Natural killer cell (primary cell): ENCODE measurements at regions of chr15 and their contacts with region 1.

Region 1: GRCh38 chr15:90233376-90234095 is at the start of gene CIB1:
- DNase-seq: peak; percentile 66 to 95
- ATAC-seq: peak; percentile 79 to 93 (median 81)
- H3K4me3 ChIP-seq: peak within 1 kb of the TSS; percentile 84
- H3K4me3 Mint-ChIP-seq: peak within 1 kb of the TSS; percentile 90
- H3K27ac ChIP-seq: peak within 1 kb of the TSS; percentile 95
- H3K27ac Mint-ChIP-seq: peak within 1 kb of the TSS; percentile 99
- H3K4me1 ChIP-seq: peaks cover 47% of the 10 kb centered on the region
- H3K4me1 Mint-ChIP-seq: peaks cover 44 to 53% of the 10 kb centered on the region in 2 donors
- H3K27me3 ChIP-seq: no peaks in the 10 kb centered on the region
- H3K27me3 Mint-ChIP-seq: no peaks in the 10 kb centered on the region
- CTCF ChIP-seq: no peak
- total RNA-seq, gene CIB1: 136 to 209 (median 154) TPM

Region 2: GRCh38 chr15:88982304-88982945 is 1251.1 kb before region 1 on chr15:
- intact Hi-C with region 1: no loop called
- DNase-seq: no peak
- ATAC-seq: no peak
- H3K4me3 ChIP-seq: no peak overlapping the region
- H3K4me3 Mint-ChIP-seq: no peak overlapping the region
- H3K27ac ChIP-seq: no peak overlapping the region
- H3K27ac Mint-ChIP-seq: peak overlapping the region in 1 of 2 donors; percentile 74
- H3K4me1 ChIP-seq: peaks cover 6% of the 10 kb centered on the region
- H3K4me1 Mint-ChIP-seq: no peaks in the 10 kb centered on the region
- H3K27me3 ChIP-seq: no peaks in the 10 kb centered on the region
- H3K27me3 Mint-ChIP-seq: peaks cover 0 to 3% of the 10 kb centered on the region in 2 donors
- CTCF ChIP-seq: no peak

Region 3: DNA sequence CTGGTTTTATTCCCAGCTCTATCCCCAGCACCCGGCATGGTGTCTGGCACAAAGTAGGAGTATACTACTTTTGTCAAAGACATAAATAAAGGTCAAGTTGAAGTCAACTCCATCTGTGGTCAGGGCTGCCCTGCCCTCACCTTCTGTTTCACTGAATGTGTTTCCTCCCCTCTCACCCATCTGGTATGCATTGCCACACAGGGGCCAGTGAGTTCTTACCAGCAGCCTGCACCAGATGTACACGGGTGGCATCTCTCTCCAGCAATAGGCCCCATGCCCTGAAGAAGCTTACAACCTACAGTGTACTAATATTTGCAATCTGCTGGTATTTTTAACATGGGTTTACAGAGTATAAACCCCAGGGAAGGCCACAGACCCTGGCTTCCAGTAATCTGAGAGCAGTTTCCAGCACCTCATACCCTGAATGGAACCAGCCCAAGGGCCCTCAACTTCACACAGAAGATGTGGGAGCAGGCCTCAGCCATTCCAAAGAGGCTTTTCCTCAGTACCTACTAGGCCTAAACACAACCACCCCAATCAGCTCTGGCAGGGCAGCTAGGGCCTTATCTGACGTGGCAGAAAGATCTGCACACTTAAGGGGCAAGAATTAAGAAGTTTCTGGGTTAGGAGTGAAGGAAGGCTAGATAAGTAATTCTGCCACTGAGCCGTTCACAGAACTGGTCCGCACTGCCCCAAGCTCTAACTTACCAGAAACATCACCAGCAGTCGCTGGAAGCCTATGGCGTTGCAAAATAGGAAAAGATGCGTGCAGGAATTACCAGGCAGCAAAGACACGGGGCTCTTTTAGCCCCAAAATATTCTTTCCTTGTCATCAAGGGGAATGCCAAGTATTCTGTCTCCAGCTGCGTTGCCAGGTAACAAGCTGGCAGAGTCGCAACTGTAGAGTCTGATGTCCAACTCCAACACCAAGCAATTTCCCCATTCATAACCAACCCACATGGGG is 133.4 kb before region 1 on chr15:
- intact Hi-C with region 1: loop called (anchors 5 kb)
- DNase-seq: peak in 1 of 2 donors; percentile 65
- ATAC-seq: no peak
- H3K4me3 ChIP-seq: no peak overlapping the region
- H3K4me3 Mint-ChIP-seq: peak overlapping the region; percentile 90
- H3K27ac ChIP-seq: peak overlapping the region; percentile 90
- H3K27ac Mint-ChIP-seq: peak overlapping the region; percentile 94 to 100
- H3K4me1 ChIP-seq: peaks cover 69% of the 10 kb centered on the region
- H3K4me1 Mint-ChIP-seq: peaks cover 70 to 72% of the 10 kb centered on the region in 2 donors
- H3K27me3 ChIP-seq: no peaks in the 10 kb centered on the region
- H3K27me3 Mint-ChIP-seq: no peaks in the 10 kb centered on the region
- CTCF ChIP-seq: no peak

Region 4: DNA sequence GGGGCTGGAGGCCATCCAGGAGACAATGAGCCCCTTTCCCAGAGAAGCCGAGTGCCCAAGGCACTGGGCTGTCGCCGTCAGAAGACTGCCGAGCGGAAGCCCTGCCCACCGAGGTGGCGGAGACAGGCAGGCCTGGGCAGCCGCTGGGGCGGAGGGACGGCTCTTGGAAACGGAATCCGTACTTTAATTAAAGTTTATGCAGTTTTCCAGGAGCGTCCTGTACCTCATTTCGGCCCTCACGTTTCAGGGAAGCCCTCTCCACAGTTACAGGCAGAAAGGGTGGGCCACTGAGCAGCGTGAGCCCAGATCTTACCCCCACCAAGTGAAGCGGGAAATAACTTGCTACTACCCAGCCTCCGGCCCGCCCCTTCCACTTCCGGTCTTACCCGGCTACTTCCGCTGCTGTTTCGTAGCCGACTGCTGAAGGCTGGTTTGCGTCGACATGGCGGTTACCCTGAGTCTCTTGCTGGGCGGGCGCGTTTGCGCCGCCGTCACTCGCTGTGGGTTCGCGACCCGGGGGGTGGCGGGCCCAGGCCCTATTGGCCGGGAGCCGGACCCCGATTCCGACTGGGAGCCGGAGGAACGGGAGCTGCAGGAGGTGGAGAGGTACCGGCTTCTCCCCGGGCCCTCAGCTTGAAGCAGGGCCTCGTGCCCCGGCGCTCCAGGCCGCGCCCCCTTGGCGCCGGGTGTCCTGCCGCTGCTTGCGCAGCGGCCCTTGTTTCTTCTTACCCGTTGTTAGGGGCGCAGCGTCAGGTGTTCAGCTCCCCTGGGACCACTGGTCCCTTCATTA is 31.9 kb after region 1 on chr15 and contains the start of gene NGRN:
- intact Hi-C with region 1: loop called (anchors 1 kb)
- DNase-seq: peak; percentile 90 to 95
- ATAC-seq: peak; percentile 86 to 95 (median 90)
- H3K4me3 ChIP-seq: peak within 1 kb of the TSS; percentile 78
- H3K4me3 Mint-ChIP-seq: peak within 1 kb of the TSS; percentile 96
- H3K27ac ChIP-seq: peak within 1 kb of the TSS; percentile 94
- H3K27ac Mint-ChIP-seq: peak within 1 kb of the TSS; percentile 97 to 98
- H3K4me1 ChIP-seq: peaks cover 30% of the 10 kb centered on the region
- H3K4me1 Mint-ChIP-seq: peaks cover 57 to 60% of the 10 kb centered on the region in 2 donors
- H3K27me3 ChIP-seq: no peaks in the 10 kb centered on the region
- H3K27me3 Mint-ChIP-seq: no peaks in the 10 kb centered on the region
- CTCF ChIP-seq: no peak
- total RNA-seq, gene NGRN: 33.4 to 43.5 (median 33.5) TPM

Region 5: GRCh38 chr15:90376789-90377188 is 143.3 kb after region 1 on chr15:
- intact Hi-C with region 1: no loop called
- DNase-seq: peak; percentile 54 to 85
- ATAC-seq: peak; percentile 87 to 96 (median 90)
- H3K4me3 ChIP-seq: no peak overlapping the region
- H3K4me3 Mint-ChIP-seq: peak overlapping the region; percentile 87
- H3K27ac ChIP-seq: peak overlapping the region; percentile 72
- H3K27ac Mint-ChIP-seq: peak overlapping the region; percentile 89 to 93
- H3K4me1 ChIP-seq: peaks cover 40% of the 10 kb centered on the region
- H3K4me1 Mint-ChIP-seq: peaks cover 49 to 52% of the 10 kb centered on the region in 2 donors
- H3K27me3 ChIP-seq: no peaks in the 10 kb centered on the region
- H3K27me3 Mint-ChIP-seq: no peaks in the 10 kb centered on the region
- CTCF ChIP-seq: no peak

Region 6: DNA sequence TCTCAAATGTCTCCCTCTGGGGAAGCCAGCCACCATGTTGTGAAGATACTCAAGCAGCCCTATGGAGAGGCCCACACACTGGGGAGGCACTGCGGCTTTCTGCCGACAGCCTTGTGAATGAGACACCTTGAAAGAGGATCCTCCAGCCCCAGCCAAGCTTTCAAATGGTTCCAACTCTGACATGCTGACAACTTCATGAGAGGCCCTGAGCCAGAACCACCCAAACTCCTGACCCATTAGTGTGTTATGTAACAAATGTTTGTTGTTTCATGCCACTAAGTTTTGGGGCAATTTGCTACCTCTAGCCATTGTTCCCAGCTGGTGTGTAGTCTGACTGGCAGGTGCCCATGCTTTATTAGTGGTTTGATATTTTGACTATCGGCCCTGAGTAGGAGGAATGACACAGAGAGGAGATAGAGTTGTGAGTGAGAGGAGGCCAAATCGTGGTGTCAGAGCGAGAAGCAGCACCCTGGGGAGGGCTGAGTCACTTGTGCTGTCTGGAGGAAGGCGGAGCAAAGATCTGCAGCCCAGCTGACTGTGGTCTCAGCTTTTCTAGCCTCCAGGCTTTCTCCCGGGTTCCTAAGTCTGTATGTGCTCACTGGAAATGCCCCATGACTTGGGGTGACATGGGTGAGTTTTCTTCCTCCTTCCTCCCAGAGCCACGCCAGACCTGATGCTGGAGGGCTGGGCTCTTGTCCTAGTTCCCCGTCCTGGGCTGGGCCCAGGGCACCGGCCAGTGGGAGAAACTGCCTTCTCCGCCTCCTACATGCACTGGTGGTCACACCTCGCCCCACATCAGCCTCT is 426.9 kb after region 1 on chr15:
- intact Hi-C with region 1: no loop called
- DNase-seq: peak; percentile 59 to 73
- ATAC-seq: peak; percentile 88 to 94 (median 91)
- H3K4me3 ChIP-seq: no peak overlapping the region
- H3K4me3 Mint-ChIP-seq: peak overlapping the region; percentile 87
- H3K27ac ChIP-seq: no peak overlapping the region
- H3K27ac Mint-ChIP-seq: peak overlapping the region; percentile 69 to 75
- H3K4me1 ChIP-seq: peaks cover 64% of the 10 kb centered on the region
- H3K4me1 Mint-ChIP-seq: peaks cover 52 to 60% of the 10 kb centered on the region in 2 donors
- H3K27me3 ChIP-seq: peaks cover 35% of the 10 kb centered on the region
- H3K27me3 Mint-ChIP-seq: peaks cover 54 to 63% of the 10 kb centered on the region in 2 donors
- CTCF ChIP-seq: no peak